Colonic mucosa (tissue), 4 donors: ENCODE measurements at regions of chr3 and their contacts with region 1.

Region 1: DNA sequence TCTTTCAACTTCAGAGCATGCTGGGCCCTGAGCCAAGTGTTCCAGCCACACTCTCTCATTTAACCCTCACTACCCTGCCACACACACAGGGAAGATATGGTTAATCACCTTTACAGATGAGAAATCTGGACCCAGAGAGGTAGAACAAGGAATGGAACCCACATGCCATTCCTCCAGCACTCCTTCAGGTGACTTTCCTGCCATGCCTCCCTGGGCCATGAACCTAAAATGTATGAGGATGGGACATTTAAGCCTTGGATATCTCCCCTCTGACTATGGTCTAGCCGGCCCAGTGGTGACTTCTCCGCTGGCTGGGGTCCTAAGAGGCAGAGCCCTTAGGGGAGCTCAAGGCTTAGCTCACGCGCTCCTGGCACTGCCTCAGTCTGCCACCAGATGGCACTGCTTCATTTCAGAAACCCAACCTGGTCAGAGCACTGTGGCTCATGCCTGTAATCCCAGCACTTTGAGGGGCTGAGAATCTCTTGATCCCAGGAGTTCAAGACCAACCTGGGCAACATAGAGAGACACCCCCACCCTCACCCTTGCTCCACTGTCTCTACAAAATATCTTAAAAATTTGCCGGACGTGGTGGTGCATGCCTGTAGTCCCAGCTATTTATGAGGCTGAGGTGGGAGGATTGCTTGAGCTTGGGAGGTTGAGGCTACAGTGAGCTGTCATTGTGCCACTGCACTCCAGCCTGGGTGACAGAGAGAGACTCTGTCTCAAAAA is 2.2 kb upstream of the DCAF1 start:
- DNase-seq: peak; percentile 87
- H3K4me3 ChIP-seq: no peak overlapping the region
- H3K27ac ChIP-seq: no peak overlapping the region
- H3K4me1 ChIP-seq: no peaks in the 10 kb centered on the region
- H3K27me3 ChIP-seq: no peaks in the 10 kb centered on the region
- CTCF ChIP-seq: peak; percentile 96

Region 2: GRCh38 chr3:51637941-51638471 is 136.0 kb after region 1 on chr3:
- intact Hi-C with region 1: loop called (anchors 1 kb)
- DNase-seq: peak; percentile 40
- H3K4me3 ChIP-seq: no peak overlapping the region
- H3K27ac ChIP-seq: no peak overlapping the region
- H3K4me1 ChIP-seq: no peaks in the 10 kb centered on the region
- H3K27me3 ChIP-seq: no peaks in the 10 kb centered on the region
- CTCF ChIP-seq: peak; percentile 61

Region 3: DNA sequence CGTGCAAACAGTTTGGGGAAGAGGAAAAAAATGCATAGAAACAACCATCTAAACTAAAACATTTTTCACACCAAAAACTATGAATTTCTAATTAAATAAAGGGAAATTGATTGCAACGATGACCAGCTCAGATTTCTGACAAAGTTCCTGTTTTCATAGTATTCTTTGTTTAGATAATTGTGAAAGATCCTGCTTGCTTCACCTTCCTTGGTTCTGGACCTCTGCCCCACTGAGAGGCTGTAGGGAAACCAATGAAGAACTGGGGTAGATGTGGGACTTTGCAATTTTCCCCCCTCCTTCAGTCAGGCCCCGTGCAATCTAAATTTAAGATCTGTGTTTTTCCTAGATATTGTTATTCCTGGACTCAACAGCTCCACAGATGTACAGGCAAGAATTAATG is 155.2 kb after region 1 on chr3:
- intact Hi-C with region 1: no loop called
- DNase-seq: no peak
- H3K4me3 ChIP-seq: no peak overlapping the region
- H3K27ac ChIP-seq: no peak overlapping the region
- H3K4me1 ChIP-seq: no peaks in the 10 kb centered on the region
- H3K27me3 ChIP-seq: no peaks in the 10 kb centered on the region
- CTCF ChIP-seq: no peak

Region 4: GRCh38 chr3:51670823-51671733 is 169.1 kb after region 1 on chr3 and contains the start of gene TEX264:
- intact Hi-C with region 1: loop called (anchors 2 kb)
- DNase-seq: peak; percentile 92
- H3K4me3 ChIP-seq: peak within 1 kb of the TSS; percentile 90
- H3K27ac ChIP-seq: peak within 1 kb of the TSS; percentile 94
- H3K4me1 ChIP-seq: peaks cover 17% of the 10 kb centered on the region
- H3K27me3 ChIP-seq: no peaks in the 10 kb centered on the region
- CTCF ChIP-seq: no peak
- total RNA-seq, gene TEX264: 54.0 to 92.3 TPM

Region 5: GRCh38 chr3:51682079-51682478 is 180.1 kb after region 1 on chr3:
- intact Hi-C with region 1: loop called (anchors 5 kb)
- DNase-seq: peak; percentile 81
- H3K4me3 ChIP-seq: no peak overlapping the region
- H3K27ac ChIP-seq: peak overlapping the region; percentile 45
- H3K4me1 ChIP-seq: peaks cover 18% of the 10 kb centered on the region
- H3K27me3 ChIP-seq: no peaks in the 10 kb centered on the region
- CTCF ChIP-seq: peak; percentile 74

Region 6: GRCh38 chr3:51799879-51800749 is 298.1 kb after region 1 on chr3:
- intact Hi-C with region 1: loop called (anchors 10 kb)
- DNase-seq: peak; percentile 42
- H3K4me3 ChIP-seq: no peak overlapping the region
- H3K27ac ChIP-seq: no peak overlapping the region
- H3K4me1 ChIP-seq: no peaks in the 10 kb centered on the region
- H3K27me3 ChIP-seq: no peaks in the 10 kb centered on the region
- CTCF ChIP-seq: peak; percentile 77